Activated CD4-positive, alpha-beta T cell treated with anti-CD3 and anti-CD28 coated beads, Interleukin-2, amount 10 ng/mL, durations not matched to agents 24 days and 14 days (primary cell): ENCODE measurements at regions of chrX and their contacts with region 1.

Region 1: GRCh38 chrX:119398974-119399771 is at the start of gene SLC25A43:
- DNase-seq: peak; percentile 80
- H3K4me3 Mint-ChIP-seq: peak within 1 kb of the TSS; percentile 92
- H3K27ac Mint-ChIP-seq: peak within 1 kb of the TSS; percentile 90
- H3K4me1 Mint-ChIP-seq: peaks cover 14% of the 10 kb centered on the region
- H3K27me3 Mint-ChIP-seq: peaks cover 2% of the 10 kb centered on the region
- total RNA-seq, gene SLC25A43: 10.6 and 10.7 TPM in 2 replicates

Region 2: GRCh38 chrX:119235872-119236622 is 163.1 kb before region 1 on chrX and contains the start of gene PGRMC1:
- intact Hi-C with region 1: loop called (anchors 10 kb)
- DNase-seq: peak; percentile 94
- H3K4me3 Mint-ChIP-seq: peak within 1 kb of the TSS; percentile 93
- H3K27ac Mint-ChIP-seq: peak within 1 kb of the TSS; percentile 76
- H3K4me1 Mint-ChIP-seq: peaks cover 18% of the 10 kb centered on the region
- H3K27me3 Mint-ChIP-seq: peaks cover 28% of the 10 kb centered on the region
- total RNA-seq, gene PGRMC1: 45.5 TPM in 2 replicates